MCF 10A (cell line): ENCODE measurements at regions of chr10 and their contacts with region 1.

Region 1: DNA sequence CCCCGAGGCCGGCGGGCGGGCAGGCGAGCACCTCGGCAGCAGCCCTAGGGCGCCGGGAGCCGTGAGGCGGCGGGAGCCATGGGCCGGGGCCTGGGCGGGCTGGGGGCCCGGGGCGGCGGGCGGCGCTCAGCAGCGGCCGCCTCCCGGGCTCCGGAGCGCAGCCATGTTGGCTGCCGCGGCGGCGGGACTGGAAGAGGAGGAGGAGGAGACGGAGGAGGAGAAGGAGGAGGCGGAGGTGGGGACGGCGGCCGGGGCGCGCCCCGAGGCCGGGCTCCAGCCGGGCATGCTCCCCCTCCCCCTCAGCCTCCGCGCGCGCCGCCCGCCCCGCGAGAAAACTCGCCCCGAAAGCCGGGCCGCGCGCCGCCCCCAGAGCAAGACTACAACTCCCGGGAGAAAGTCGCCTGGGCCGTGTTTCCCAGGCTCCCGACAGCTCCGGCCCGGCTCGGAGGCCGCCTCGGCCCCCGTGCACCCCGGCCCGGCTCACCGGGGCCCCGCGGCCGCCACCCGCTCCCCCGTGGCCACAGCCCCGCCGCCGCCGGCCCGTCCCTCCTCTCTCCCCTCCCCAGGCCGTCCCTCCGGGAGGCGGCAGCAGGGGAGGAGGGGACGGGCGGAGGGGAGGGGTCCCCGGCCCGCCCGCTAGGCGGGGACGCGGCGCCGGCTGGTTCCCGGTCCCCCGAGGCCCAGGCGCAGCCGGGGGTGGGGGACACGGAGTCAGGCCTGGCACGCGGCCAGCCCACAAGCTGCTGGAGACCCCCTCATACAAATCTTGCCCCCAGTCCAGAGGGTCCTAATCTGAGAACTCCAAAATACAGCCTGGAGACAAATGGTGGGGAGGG is at the start of gene DLG5:
- DNase-seq: peak; percentile 61
- H3K4me3 Mint-ChIP-seq: peak within 1 kb of the TSS; percentile 90
- H3K27ac Mint-ChIP-seq: peak within 1 kb of the TSS; percentile 80
- H3K4me1 Mint-ChIP-seq: peaks cover 29% of the 10 kb centered on the region
- H3K27me3 Mint-ChIP-seq: no peaks in the 10 kb centered on the region
- CTCF ChIP-seq: no peak
- total RNA-seq, gene DLG5: 126 and 127 TPM in 2 replicates

Region 2: DNA sequence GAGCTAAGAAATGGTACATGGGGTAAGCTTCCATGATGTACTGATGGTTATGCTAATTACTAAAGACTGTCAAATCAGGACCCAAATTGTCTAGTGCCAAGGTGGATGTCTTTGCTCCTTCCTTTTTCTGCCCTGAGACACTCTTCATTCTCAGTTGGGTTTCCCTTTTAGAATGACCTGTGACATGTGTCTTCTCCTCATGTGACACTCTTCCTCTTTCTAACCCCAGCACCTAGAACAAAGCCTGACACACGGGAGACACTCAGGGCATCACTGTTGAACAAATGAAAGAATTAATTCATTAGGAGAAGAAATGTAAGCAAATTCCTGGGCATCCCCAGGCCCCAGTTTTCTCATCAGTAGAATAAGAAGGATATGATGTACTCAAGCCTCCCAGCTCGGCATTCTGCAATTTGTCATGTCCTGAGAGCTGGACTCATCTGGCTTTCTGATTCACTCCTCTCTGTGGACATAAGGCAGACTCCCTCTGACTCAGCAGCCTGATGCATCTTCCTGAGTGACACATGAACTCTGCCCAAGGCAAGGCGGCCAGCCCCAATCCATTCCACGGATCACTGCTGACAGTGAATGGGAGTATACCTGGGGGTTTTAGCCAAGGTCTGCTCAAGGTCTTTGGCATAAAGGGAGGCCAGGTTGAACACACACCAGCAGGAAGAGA is 763.0 kb before region 1 on chr10:
- CTCF ChIA-PET with region 1: no interaction called
- POLR2A ChIA-PET with region 1: no interaction called
- intact Hi-C with region 1: no loop called
- DNase-seq: peak; percentile 97
- H3K4me3 Mint-ChIP-seq: peak overlapping the region; percentile 33
- H3K27ac Mint-ChIP-seq: peak overlapping the region; percentile 71
- H3K4me1 Mint-ChIP-seq: peaks cover 47% of the 10 kb centered on the region
- H3K27me3 Mint-ChIP-seq: no peaks in the 10 kb centered on the region
- CTCF ChIP-seq: no peak

Region 3: GRCh38 chr10:77846718-77847630 is 79.8 kb before region 1 on chr10:
- CTCF ChIA-PET with region 1: interaction called, 4 read pairs
- POLR2A ChIA-PET with region 1: interaction called, 25 read pairs
- intact Hi-C with region 1: loop called (anchors 1 kb)
- DNase-seq: peak; percentile 79
- H3K4me3 Mint-ChIP-seq: peak overlapping the region; percentile 56
- H3K27ac Mint-ChIP-seq: peak overlapping the region; percentile 78
- H3K4me1 Mint-ChIP-seq: peaks cover 55% of the 10 kb centered on the region
- H3K27me3 Mint-ChIP-seq: no peaks in the 10 kb centered on the region
- CTCF ChIP-seq: peak; percentile 94

Region 4: GRCh38 chr10:77863446-77863845 is 63.3 kb before region 1 on chr10:
- CTCF ChIA-PET with region 1: interaction called, 4 read pairs
- POLR2A ChIA-PET with region 1: interaction called, 39 read pairs
- intact Hi-C with region 1: no loop called
- DNase-seq: no peak
- H3K4me3 Mint-ChIP-seq: no peak overlapping the region
- H3K27ac Mint-ChIP-seq: peak overlapping the region; percentile 97
- H3K4me1 Mint-ChIP-seq: peaks cover 63% of the 10 kb centered on the region
- H3K27me3 Mint-ChIP-seq: no peaks in the 10 kb centered on the region
- CTCF ChIP-seq: no peak

Region 5: DNA sequence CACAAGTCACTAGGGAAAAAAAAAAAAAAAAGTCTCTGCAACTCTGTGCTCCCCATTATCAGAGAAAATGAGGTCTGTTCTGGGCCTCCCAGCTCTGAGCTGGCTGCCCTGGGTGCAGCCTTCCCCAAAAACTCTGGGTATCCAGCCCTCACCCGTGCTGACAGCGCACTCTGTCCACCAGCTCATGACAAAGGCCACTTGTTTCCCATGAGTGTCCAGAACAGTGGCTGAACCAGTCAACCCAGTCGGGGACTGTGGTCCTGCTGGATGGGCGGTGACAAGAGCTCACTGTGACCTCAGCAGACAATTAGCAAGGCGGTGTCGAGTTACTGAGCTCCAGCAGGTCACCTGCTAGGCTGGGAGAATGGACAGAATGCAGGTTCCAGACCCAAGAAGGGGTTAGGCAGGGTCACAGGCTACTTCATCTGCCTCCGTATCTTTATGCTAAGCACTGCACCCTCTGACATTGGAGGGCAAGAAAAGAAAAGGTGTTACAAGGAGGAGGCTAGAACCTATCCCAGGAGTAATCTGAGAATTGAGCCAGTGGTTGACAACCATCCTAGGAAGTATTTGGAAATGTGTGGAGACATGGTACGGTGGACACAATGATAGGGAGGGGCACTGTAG is 37.4 kb before region 1 on chr10:
- CTCF ChIA-PET with region 1: interaction called, 5 read pairs
- POLR2A ChIA-PET with region 1: interaction called, 17 read pairs
- intact Hi-C with region 1: no loop called
- DNase-seq: peak; percentile 50
- H3K4me3 Mint-ChIP-seq: peak overlapping the region; percentile 57
- H3K27ac Mint-ChIP-seq: peak overlapping the region; percentile 77
- H3K4me1 Mint-ChIP-seq: peaks cover 77% of the 10 kb centered on the region
- H3K27me3 Mint-ChIP-seq: no peaks in the 10 kb centered on the region
- CTCF ChIP-seq: no peak

Region 6: DNA sequence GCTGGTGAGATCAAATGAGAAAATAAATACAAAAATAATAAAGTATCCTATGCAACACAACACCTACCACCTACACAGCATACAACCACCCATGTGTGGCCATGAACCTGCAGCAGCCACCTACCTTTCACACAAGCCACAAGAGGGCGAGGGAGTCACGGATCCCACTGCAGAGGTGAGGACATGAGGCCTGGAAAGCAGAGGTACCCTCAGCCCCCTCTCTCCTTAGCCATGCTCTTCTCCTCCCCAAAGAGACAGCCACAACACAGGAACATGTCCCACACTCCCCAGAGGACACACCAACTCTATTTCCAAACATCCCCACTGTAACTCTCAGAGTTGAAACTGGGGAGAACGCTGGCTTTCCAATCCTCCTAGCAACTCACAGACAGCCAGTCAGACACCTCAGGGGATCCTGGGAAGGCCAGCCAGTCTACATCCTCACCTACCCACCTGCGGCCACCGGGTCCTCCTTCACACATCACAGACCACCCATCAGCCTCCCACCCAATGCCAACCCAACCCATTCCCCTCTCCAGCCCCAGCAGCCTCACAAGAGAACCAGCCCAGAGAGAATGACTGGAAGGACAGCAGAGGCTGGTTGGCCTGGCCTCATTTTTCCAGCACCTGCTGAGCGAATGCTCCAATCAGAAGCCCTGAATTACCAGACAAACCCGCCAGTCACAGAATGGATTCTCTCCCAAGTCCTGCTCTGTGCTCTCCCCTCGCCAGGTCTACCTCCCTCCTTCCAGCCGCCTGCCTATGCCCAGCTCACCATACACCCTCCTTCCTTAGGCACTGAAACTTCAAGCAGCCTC is 18.7 kb before region 1 on chr10:
- CTCF ChIA-PET with region 1: interaction called, 7 read pairs
- POLR2A ChIA-PET with region 1: interaction called, 12 read pairs
- intact Hi-C with region 1: no loop called
- DNase-seq: peak; percentile 68
- H3K4me3 Mint-ChIP-seq: no peak overlapping the region
- H3K27ac Mint-ChIP-seq: peak overlapping the region; percentile 76
- H3K4me1 Mint-ChIP-seq: peaks cover 58% of the 10 kb centered on the region
- H3K27me3 Mint-ChIP-seq: no peaks in the 10 kb centered on the region
- CTCF ChIP-seq: peak; percentile 37

Region 7: GRCh38 chr10:77949167-77949566 is 22.4 kb after region 1 on chr10:
- CTCF ChIA-PET with region 1: interaction called, 4 read pairs
- POLR2A ChIA-PET with region 1: interaction called, 11 read pairs
- intact Hi-C with region 1: no loop called
- DNase-seq: peak; percentile 96
- H3K4me3 Mint-ChIP-seq: no peak overlapping the region
- H3K27ac Mint-ChIP-seq: peak overlapping the region; percentile 11
- H3K4me1 Mint-ChIP-seq: peaks cover 34% of the 10 kb centered on the region
- H3K27me3 Mint-ChIP-seq: no peaks in the 10 kb centered on the region
- CTCF ChIP-seq: no peak